ENCODE measurements at regions of chr10 and their contacts with region 1.

Region 1: GRCh38 chr10:25026463-25026862 is 10.1 kb downstream of the THNSL1 start:
- DNase-seq: peak; percentile 34
- H3K4me3 Mint-ChIP-seq: no peak overlapping the region
- H3K27ac Mint-ChIP-seq: no peak overlapping the region
- H3K4me1 Mint-ChIP-seq: no peaks in the 10 kb centered on the region
- H3K27me3 Mint-ChIP-seq: no peaks in the 10 kb centered on the region
- CTCF ChIP-seq: peak; percentile 32

Region 2: DNA sequence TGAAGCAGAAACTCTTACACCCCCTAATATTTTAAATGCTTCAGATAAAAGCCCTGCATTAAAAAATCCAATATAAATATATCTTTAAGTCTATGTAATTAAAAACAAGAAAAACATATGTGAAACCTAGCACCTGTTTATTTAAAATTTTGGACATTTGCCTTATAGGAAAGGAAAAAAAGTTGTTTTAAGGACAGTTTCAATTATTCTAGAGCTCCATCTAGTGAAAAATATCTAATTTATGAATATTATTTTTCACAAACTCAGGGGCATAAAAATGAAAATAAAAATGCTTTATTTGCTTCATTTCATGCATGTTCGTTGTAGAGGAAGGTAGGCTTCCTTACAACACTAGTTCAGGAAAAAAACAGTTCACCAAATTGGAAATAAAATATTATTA is 36.6 kb before region 1 on chr10:
- CTCF ChIA-PET with region 1: no interaction called
- POLR2A ChIA-PET with region 1: no interaction called
- intact Hi-C with region 1: no loop called
- DNase-seq: peak; percentile 4
- H3K4me3 Mint-ChIP-seq: no peak overlapping the region
- H3K27ac Mint-ChIP-seq: no peak overlapping the region
- H3K4me1 Mint-ChIP-seq: no peaks in the 10 kb centered on the region
- H3K27me3 Mint-ChIP-seq: no peaks in the 10 kb centered on the region
- CTCF ChIP-seq: peak; percentile 37

Region 3: DNA sequence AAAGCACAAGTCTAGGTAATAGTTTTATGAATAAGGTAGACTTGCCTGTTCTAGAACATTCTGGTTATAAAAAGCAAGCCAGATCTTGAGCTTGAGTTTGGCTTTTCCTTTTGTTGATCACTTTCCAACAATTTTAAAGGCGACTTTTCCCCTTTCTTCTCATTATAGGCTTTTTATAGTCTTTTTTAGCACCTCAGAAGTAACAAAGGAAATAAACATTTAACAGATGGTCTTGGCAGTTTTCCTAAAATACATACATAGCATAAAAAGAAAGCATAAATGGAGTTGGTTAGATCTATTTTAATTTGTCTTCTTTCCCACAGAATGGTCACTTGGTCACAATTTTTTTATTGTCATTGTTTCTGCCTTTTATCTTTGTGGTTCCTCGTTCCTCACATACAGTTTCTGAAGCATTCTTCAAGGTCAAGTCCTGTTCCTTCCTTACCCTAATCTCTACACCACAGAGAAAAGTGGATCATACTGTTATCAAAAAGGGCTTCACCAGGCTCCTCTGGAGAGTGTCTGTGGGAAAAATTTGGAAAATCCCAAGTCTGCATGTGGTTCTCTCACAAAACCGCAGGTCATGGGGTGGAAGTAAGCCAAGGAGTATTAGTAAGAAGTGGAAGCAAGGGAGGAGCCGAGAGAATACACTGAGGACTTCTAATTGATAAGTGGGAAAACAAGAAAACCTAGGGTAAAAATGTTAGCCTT is 21.3 kb after region 1 on chr10:
- CTCF ChIA-PET with region 1: interaction called, 13 read pairs
- POLR2A ChIA-PET with region 1: interaction called, 3 read pairs
- intact Hi-C with region 1: no loop called
- DNase-seq: peak; percentile 71
- H3K4me3 Mint-ChIP-seq: no peak overlapping the region
- H3K27ac Mint-ChIP-seq: peak overlapping the region; percentile 5
- H3K4me1 Mint-ChIP-seq: peaks cover 17% of the 10 kb centered on the region
- H3K27me3 Mint-ChIP-seq: no peaks in the 10 kb centered on the region
- CTCF ChIP-seq: no peak

Measured in MCF 10A (cell line).